PC-3 (cell line): ENCODE measurements at regions of chr13 and their contacts with region 1.

Region 1: DNA sequence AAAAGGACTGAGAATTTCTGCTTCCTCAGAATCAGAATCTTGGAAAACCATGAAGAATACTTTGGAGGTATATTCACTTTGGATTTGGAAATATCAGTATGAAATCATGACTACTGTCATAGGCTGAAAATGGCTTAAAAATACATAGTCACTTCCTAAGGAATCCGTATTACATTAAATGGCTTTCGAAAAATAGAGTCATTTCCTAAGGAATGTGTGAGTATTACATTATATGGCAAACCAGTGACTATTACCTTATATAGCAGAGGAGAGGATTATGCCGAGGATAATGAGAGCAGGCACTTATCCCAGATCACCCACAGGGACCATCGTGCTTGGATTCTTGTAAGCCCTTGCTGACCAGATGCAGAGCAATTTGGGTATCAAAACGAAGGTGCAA is 1471.8 kb downstream of the EFNB2 start:
- DNase-seq: peak; percentile 3
- ATAC-seq: no peak
- H3K4me3 ChIP-seq: no peak overlapping the region
- H3K27ac ChIP-seq: no peak overlapping the region
- H3K4me1 ChIP-seq: 0 out of 2 replicates have a peak, but pooled peaks cover under 1% of the 10 kb centered on the region
- H3K27me3 ChIP-seq: no peaks in the 10 kb centered on the region
- CTCF ChIP-seq: no peak

Region 2: GRCh38 chr13:104773775-104774174 is 289.9 kb before region 1 on chr13:
- CTCF ChIA-PET with region 1: no interaction called
- POLR2A ChIA-PET with region 1: no interaction called
- intact Hi-C with region 1: loop called (anchors 10 kb)
- DNase-seq: peak; percentile 71
- ATAC-seq: peak; percentile 70
- H3K4me3 ChIP-seq: no peak overlapping the region
- H3K27ac ChIP-seq: no peak overlapping the region
- H3K4me1 ChIP-seq: 0 out of 2 replicates have a peak, but pooled peaks cover 2% of the 10 kb centered on the region
- H3K27me3 ChIP-seq: no peaks in the 10 kb centered on the region
- CTCF ChIP-seq: peak; percentile 66